ENCODE measurements at regions of chr2 and their contacts with region 1.

Region 1: GRCh38 chr2:11129598-11130449 is 25.4 kb upstream of the SLC66A3 start:
- DNase-seq: peak; percentile 76
- CTCF ChIP-seq: peak; percentile 45

Region 2: GRCh38 chr2:10668402-10669012 is 461.3 kb before region 1 on chr2:
- CTCF ChIA-PET with region 1: no interaction called
- POLR2A ChIA-PET with region 1: no interaction called
- DNase-seq: no peak
- CTCF ChIP-seq: peak; percentile 44

Region 3: GRCh38 chr2:11092701-11093335 is 37.0 kb before region 1 on chr2:
- CTCF ChIA-PET with region 1: interaction called, 17 read pairs
- POLR2A ChIA-PET with region 1: no interaction called
- DNase-seq: no peak
- CTCF ChIP-seq: no peak

Region 4: DNA sequence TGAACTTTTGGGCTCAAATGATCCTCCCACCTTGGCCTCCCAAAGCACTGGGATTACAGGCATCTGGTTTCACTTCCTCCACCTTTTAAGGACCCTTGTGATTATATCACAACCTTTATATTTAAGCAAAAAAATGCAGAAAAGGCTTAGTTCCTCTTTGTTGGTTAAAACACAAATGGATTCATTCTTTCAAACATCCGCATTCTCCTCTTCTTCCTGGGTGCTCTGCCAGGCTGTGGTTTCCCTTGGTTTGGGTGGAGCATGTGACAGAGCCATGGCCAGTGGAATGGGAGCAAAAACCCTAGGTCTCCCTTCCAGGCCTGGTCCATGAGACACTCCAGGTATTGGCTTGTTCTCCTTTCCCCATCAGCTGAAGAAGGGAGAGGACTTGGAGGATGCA is 15.5 kb after region 1 on chr2:
- CTCF ChIA-PET with region 1: interaction called, 51 read pairs
- POLR2A ChIA-PET with region 1: no interaction called
- DNase-seq: no peak
- CTCF ChIP-seq: no peak

Region 5: DNA sequence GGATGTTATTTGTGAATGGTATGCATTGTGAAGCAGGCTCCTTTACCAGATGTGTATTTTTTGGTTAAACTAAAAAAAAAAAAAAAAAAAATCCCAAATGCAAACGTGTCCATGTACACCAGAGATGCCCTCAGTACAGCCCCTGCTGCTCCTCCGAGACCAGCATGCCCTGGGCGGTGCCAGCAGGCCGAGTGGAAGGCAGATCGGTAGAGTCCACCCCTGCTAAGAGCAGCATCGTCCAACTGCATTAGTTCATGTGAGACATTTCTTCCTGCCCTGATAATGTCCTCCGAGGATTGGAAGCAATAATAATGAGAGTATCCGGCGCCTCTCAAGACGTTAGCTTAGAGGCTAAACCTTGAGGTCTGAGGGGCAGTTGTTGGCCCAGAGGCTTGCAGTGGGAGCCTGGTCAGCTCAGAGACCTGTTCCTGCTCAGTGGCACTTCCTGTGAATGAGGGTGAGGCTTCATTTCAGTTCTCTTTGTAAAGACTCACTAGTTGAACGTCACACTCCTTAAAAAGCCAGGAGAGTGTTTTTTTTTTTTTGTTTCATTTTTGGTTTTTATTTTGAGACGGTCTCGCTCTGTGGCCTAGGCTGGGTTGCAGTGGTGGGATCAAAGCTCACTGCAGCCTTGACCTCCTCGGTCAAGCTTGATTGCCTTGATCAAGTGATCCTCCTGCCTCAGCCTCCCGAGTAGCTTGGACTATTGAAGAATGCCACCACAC is 31.1 kb after region 1 on chr2:
- CTCF ChIA-PET with region 1: interaction called, 10 read pairs
- POLR2A ChIA-PET with region 1: no interaction called
- DNase-seq: peak; percentile 62
- CTCF ChIP-seq: no peak

Region 6: GRCh38 chr2:11446733-11447248 is 317.0 kb after region 1 on chr2:
- CTCF ChIA-PET with region 1: interaction called, 37 read pairs
- POLR2A ChIA-PET with region 1: no interaction called
- DNase-seq: peak; percentile 43
- CTCF ChIP-seq: peak; percentile 55